Heart left ventricle (tissue), 16 donors: ENCODE measurements at regions of chr12 and their contacts with region 1.

Region 1: DNA sequence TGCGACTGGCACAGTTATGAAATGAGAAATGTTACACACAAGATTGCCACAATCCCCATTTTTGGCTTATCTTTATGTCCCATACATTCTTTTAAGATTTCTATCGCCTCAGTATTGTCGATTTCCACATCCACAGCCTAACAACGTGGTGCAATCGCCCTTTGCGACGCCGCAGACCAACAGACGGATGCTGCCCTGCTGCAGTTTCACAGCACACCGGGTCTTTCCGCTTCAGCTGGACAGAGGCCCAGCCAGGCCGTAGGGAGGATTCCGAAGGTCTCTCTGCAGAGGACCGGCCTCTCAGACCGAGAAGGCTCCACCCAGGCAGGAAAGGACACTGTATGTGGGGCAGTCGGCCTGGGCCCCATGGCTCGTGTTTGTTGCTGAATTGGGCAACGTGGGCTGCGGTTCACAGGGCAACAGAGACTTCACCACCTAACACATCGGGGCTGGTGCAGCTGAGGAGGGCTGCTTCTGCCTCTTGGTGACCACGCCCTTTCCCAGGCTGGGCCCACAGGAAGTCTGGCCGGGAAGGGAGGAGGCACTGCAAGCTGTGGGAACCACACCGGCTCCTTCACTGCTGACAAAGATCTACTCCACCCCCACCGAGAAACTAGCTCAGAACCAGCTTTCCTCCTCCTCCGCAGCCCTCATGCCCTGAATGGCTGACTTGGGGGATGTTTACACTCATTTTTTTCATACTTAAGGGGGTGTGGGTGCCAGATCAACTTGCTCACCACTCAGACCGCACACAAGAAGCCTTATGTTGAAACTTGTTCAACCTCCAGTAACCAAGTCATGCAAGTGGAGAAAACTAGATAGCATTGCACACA is 32.9 kb upstream of the MDM1 start:
- DNase-seq: peak; percentile 90 to 96 (median 93)
- ATAC-seq: peak; percentile 94 to 99 (median 98)
- H3K4me3 ChIP-seq: peak overlapping the region in 11 of 12 donors; percentile 18 to 52 (median 44)
- H3K27ac ChIP-seq: peak overlapping the region; percentile 35 to 91 (median 86)
- H3K4me1 ChIP-seq: peaks cover 0 to 50% (median 20%) of the 10 kb centered on the region in 12 donors
- H3K27me3 ChIP-seq: no peaks in the 10 kb centered on the region
- CTCF ChIP-seq: peak in 3 of 12 donors; percentile 6 to 31 (median 25)
- POLR2A ChIP-seq: no peak

Region 2: GRCh38 chr12:68406134-68406594 is 41.1 kb after region 1 on chr12:
- intact Hi-C with region 1: loop called (anchors 1 to 5 kb)
- DNase-seq: peak; percentile 93 to 96 (median 95)
- ATAC-seq: peak; percentile 94 to 99 (median 99)
- H3K4me3 ChIP-seq: peak overlapping the region in 1 of 12 donors; percentile 26
- H3K27ac ChIP-seq: peak overlapping the region; percentile 45 to 87 (median 74)
- H3K4me1 ChIP-seq: peaks cover 5 to 32% (median 24%) of the 10 kb centered on the region in 12 donors
- H3K27me3 ChIP-seq: no peaks in the 10 kb centered on the region
- CTCF ChIP-seq: peak in 10 of 12 donors; percentile 27 to 65 (median 46)
- POLR2A ChIP-seq: peak in 1 of 2 donors; percentile 0

Region 3: DNA sequence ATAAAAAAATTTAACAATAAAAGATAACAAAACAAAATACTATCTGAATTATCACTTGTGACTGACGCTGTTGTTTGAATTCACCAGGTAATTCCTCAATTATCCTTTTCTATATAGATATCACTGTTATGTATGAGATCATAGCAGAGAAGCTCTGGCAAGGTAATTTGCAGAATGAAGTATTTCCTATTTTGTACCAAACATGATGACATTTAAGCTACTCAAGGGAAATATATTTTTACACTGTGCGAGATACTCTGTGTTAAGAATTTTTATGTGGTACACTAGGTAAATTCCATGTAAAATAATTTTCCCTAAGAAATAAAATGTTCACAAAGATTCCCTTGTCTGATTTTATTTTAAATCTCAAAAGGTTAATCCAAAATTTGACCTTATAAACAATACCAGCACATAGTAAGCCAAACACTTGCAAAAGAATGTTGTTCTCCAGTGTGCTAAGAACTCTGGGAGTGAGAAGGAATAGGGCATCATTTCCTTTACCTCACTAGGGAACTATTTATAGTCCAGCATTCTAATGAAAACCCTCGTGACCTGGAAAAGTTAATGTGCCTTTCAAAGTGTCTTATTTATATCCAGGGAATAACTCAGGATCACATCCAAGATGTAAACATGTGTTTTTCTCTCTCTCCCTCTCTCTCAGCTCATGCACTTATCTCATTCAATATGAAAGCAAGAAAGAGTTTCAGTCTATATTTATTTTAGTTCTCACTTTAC is 130.4 kb after region 1 on chr12:
- intact Hi-C with region 1: loop called in 1 of 10 experiments (anchors 1 kb)
- DNase-seq: no peak
- ATAC-seq: peak in 3 of 4 donors; percentile 83 to 89 (median 88)
- H3K4me3 ChIP-seq: no peak overlapping the region
- H3K27ac ChIP-seq: peak overlapping the region in 10 of 12 donors; percentile 1 to 51 (median 32)
- H3K4me1 ChIP-seq: peaks cover 0 to 16% (median 7%) of the 10 kb centered on the region in 12 donors
- H3K27me3 ChIP-seq: no peaks in the 10 kb centered on the region
- CTCF ChIP-seq: no peak
- POLR2A ChIP-seq: no peak

Region 4: GRCh38 chr12:68665016-68665569 is 300.0 kb after region 1 on chr12:
- intact Hi-C with region 1: loop called in 2 of 10 experiments (anchors 5 to 10 kb)
- DNase-seq: no peak
- ATAC-seq: peak; percentile 71 to 92 (median 78)
- H3K4me3 ChIP-seq: no peak overlapping the region
- H3K27ac ChIP-seq: peak overlapping the region in 1 of 12 donors; percentile 44
- H3K4me1 ChIP-seq: peaks cover 0 to 7% (median 2%) of the 10 kb centered on the region in 12 donors
- H3K27me3 ChIP-seq: no peaks in the 10 kb centered on the region
- CTCF ChIP-seq: peak in 7 of 12 donors; percentile 7 to 46 (median 24)
- POLR2A ChIP-seq: no peak